ENCODE measurements at regions of chr15 and their contacts with region 1.

Region 1: DNA sequence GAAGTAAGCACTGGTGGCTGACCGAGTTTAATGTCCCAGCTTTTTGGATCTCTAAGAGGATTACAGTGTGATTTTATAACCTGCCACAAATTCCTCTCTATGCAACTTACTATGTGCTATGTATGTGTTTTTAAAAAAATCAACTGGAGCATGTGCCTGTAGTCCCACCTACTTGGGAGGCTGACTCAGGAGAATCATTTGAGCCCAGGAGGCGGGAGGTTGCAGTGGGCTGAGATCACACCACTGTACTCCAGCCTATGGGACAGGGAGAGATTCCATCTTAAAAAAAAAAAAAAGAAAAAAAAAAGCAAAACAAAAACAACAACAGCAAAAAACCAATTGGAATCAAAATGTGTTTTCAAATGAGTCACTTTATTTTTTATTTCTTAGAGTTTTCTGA is 29.6 kb downstream of the DUT start:
- DNase-seq: no peak
- ATAC-seq: no peak

Region 2: GRCh38 chr15:48645558-48646330 is 284.9 kb after region 1 on chr15 and contains the start of gene FBN1:
- intact Hi-C with region 1: loop called (anchors 10 kb)
- DNase-seq: peak; percentile 80
- ATAC-seq: peak; percentile 84
- total RNA-seq, gene FBN1: 39.4 TPM

Region 3: GRCh38 chr15:48800811-48801455 is 440.1 kb after region 1 on chr15:
- intact Hi-C with region 1: loop called (anchors 5 kb)
- DNase-seq: no peak
- ATAC-seq: peak; percentile 64